CD8-positive, alpha-beta T cell (primary cell): ENCODE measurements at regions of chr19 and their contacts with region 1.

Region 1: GRCh38 chr19:48784540-48784939 is 26.3 kb downstream of the BCAT2 start:
- DNase-seq: no peak
- ATAC-seq: no peak
- H3K4me3 ChIP-seq: no peak overlapping the region
- H3K4me3 Mint-ChIP-seq: no peak overlapping the region
- H3K27ac ChIP-seq: no peak overlapping the region
- H3K27ac Mint-ChIP-seq: no peak overlapping the region
- H3K4me1 ChIP-seq: peaks cover 3% of the 10 kb centered on the region
- H3K4me1 Mint-ChIP-seq: peaks cover 6% of the 10 kb centered on the region
- H3K27me3 ChIP-seq: no peaks in the 10 kb centered on the region
- H3K27me3 Mint-ChIP-seq: peaks cover 12% of the 10 kb centered on the region
- CTCF ChIP-seq: no peak

Region 2: GRCh38 chr19:48734625-48735555 is 49.6 kb before region 1 on chr19:
- CTCF ChIA-PET with region 1: no interaction called
- POLR2A ChIA-PET with region 1: no interaction called
- intact Hi-C with region 1: no loop called
- DNase-seq: peak in 1 of 9 experiments; percentile 21
- ATAC-seq: no peak
- H3K4me3 ChIP-seq: no peak overlapping the region
- H3K4me3 Mint-ChIP-seq: no peak overlapping the region
- H3K27ac ChIP-seq: no peak overlapping the region
- H3K27ac Mint-ChIP-seq: no peak overlapping the region
- H3K4me1 ChIP-seq: peaks cover 13% of the 10 kb centered on the region
- H3K4me1 Mint-ChIP-seq: peaks cover 7% of the 10 kb centered on the region
- H3K27me3 ChIP-seq: peaks cover under 1 to 3% of the 10 kb centered on the region in 2 experiments
- H3K27me3 Mint-ChIP-seq: no peaks in the 10 kb centered on the region
- CTCF ChIP-seq: no peak

Region 3: GRCh38 chr19:48826606-48827020 is 42.1 kb after region 1 on chr19:
- CTCF ChIA-PET with region 1: interaction called, 11 read pairs
- POLR2A ChIA-PET with region 1: no interaction called
- intact Hi-C with region 1: no loop called
- DNase-seq: no peak
- ATAC-seq: no peak
- H3K4me3 ChIP-seq: no peak overlapping the region
- H3K4me3 Mint-ChIP-seq: no peak overlapping the region
- H3K27ac ChIP-seq: no peak overlapping the region
- H3K27ac Mint-ChIP-seq: no peak overlapping the region
- H3K4me1 ChIP-seq: no peaks in the 10 kb centered on the region
- H3K4me1 Mint-ChIP-seq: no peaks in the 10 kb centered on the region
- H3K27me3 ChIP-seq: no peaks in the 10 kb centered on the region
- H3K27me3 Mint-ChIP-seq: no peaks in the 10 kb centered on the region
- CTCF ChIP-seq: no peak

Region 4: GRCh38 chr19:48970923-48971395 is 186.4 kb after region 1 on chr19:
- CTCF ChIA-PET with region 1: interaction called, 21 read pairs
- POLR2A ChIA-PET with region 1: no interaction called
- intact Hi-C with region 1: loop called (anchors 1 kb)
- DNase-seq: peak; percentile 67 to 91 (median 86)
- ATAC-seq: peak; percentile 91
- H3K4me3 ChIP-seq: no peak overlapping the region
- H3K4me3 Mint-ChIP-seq: no peak overlapping the region
- H3K27ac ChIP-seq: no peak overlapping the region
- H3K27ac Mint-ChIP-seq: no peak overlapping the region
- H3K4me1 ChIP-seq: peaks cover 10% of the 10 kb centered on the region
- H3K4me1 Mint-ChIP-seq: peaks cover 19% of the 10 kb centered on the region
- H3K27me3 ChIP-seq: no peaks in the 10 kb centered on the region
- H3K27me3 Mint-ChIP-seq: no peaks in the 10 kb centered on the region
- CTCF ChIP-seq: peak; percentile 84